Activated CD4-positive, alpha-beta T cell treated with anti-CD3 and anti-CD28 coated beads for 36 hours (primary cell): ENCODE measurements at regions of chr11 and their contacts with region 1.

Region 1: GRCh38 chr11:117946842-117947526 is 17.8 kb upstream of the TMPRSS13 start:
- DNase-seq: peak; percentile 92
- ATAC-seq: peak; percentile 59
- H3K4me3 Mint-ChIP-seq: no peak overlapping the region
- H3K27ac Mint-ChIP-seq: peak overlapping the region; percentile 68
- H3K4me1 Mint-ChIP-seq: peaks cover 79% of the 10 kb centered on the region
- H3K27me3 Mint-ChIP-seq: no peaks in the 10 kb centered on the region

Region 2: DNA sequence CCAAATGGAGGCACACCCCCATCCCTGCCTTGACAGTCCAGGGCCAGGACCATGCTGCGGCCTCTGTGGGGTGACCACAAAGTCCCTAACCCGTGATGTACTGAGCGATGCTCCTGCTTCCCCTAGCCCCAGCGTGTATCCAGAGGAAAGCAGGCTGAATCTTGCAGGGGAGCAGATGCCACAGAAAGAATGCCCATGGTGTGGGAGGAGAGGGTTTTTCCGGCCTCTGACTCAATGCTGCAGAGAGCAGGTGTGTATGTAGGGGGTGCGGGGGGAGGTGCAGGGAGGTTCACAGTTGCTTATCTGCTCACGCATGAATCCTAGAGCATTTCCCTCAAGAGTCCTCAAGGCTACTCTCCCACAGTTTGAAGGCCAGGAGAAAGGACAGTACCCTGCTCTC is 488.7 kb before region 1 on chr11:
- CTCF ChIA-PET with region 1: no interaction called
- POLR2A ChIA-PET with region 1: no interaction called
- intact Hi-C with region 1: loop called in 1 of 2 experiments (anchors 5 kb)
- DNase-seq: peak; percentile 73
- ATAC-seq: peak; percentile 57
- H3K4me3 Mint-ChIP-seq: peak overlapping the region; percentile 17
- H3K27ac Mint-ChIP-seq: peak overlapping the region; percentile 25
- H3K4me1 Mint-ChIP-seq: peaks cover 17% of the 10 kb centered on the region
- H3K27me3 Mint-ChIP-seq: peaks cover 7% of the 10 kb centered on the region

Region 3: DNA sequence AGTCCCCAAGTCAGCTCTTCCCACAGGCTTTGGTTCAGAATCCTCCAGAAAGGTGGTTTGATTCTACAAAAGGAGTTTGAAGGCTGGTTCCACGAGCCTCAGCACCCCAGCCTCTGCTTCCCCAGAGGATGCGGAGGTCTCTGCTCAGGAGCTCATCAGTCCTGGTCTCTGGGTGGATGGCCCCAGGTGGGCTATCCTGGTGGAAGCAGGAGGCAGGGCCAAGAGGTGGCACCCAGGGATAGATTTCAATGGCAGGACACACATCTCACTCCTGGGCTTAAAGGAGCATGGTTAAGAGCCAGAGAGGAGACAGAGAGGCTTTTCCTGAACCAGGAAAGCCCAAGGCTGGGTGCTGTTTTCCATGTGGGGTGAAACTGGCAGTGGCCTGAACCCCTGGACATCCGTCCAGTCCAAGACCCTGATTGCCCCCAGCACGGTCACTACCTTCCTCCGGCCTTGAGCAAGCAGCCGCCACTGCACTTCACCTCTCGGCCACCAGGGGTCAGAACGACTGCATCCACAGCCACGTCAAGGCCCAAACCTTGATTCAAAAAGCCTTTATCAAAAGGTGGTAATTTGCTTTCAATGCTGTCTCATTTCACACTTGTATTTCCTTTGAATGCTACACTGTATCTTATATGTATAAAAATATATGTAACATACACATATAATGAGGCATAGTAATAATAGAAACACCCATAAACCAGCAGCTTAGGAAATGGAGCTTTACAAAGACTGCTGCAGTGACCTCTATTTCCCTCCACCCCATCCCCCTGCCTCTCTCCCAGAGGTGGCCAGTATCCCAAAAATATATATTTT is 103.1 kb before region 1 on chr11:
- CTCF ChIA-PET with region 1: interaction called, 72 read pairs
- POLR2A ChIA-PET with region 1: no interaction called
- intact Hi-C with region 1: loop called (anchors 1 kb)
- DNase-seq: peak; percentile 91
- ATAC-seq: peak; percentile 89
- H3K4me3 Mint-ChIP-seq: no peak overlapping the region
- H3K27ac Mint-ChIP-seq: no peak overlapping the region
- H3K4me1 Mint-ChIP-seq: no peaks in the 10 kb centered on the region
- H3K27me3 Mint-ChIP-seq: no peaks in the 10 kb centered on the region

Region 4: GRCh38 chr11:117932067-117932370 is 15.0 kb before region 1 on chr11:
- CTCF ChIA-PET with region 1: interaction called, 74 read pairs
- POLR2A ChIA-PET with region 1: interaction called, 3 read pairs
- intact Hi-C with region 1: no loop called
- DNase-seq: peak; percentile 85
- ATAC-seq: peak; percentile 70
- H3K4me3 Mint-ChIP-seq: no peak overlapping the region
- H3K27ac Mint-ChIP-seq: peak overlapping the region; percentile 93
- H3K4me1 Mint-ChIP-seq: peaks cover 62% of the 10 kb centered on the region
- H3K27me3 Mint-ChIP-seq: no peaks in the 10 kb centered on the region

Region 5: DNA sequence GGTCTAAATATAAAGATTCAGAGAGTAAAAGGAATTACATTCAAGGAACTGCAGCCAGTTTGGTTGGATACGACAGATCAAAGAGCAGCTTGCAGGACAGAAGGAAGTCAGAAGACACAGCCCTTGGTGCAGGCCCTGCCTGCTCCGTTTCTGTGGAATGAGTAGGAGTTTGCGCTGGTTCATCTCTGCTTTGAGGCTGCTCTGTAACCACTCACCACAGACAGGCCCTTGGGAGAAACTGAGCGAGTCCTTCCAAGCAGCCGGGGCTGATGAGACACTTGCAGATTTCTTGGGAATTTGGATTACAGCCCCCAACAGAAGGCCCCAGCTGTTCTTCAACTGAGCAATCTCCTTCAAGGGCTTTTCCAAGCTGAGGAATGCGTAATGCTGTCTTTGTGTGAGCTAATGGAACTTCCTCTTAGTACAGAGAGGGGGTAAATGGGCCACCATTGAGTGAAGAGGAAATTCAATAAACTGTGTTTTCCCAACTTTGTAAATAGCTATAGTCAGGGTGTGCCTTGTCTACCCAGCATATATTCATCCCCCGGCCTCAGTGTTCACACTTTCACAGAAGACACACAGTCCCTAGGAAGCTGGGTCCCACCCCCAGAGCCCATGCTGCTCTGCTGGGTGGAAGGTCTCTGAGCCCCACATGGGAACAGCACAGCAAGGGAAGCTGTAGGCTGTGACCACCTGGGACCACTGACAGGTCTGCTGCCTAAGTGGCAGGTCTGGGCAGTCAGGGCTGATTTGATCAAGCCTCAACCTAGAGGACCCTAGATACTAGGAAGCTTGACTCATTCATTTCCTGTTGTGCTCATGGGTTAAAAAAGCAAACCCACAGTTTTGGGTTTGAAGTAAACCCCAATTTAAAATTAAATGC is 55.8 kb after region 1 on chr11:
- CTCF ChIA-PET with region 1: interaction called, 13 read pairs
- POLR2A ChIA-PET with region 1: interaction called, 5 read pairs
- intact Hi-C with region 1: loop called (anchors 2 kb)
- DNase-seq: peak; percentile 85
- ATAC-seq: peak; percentile 67
- H3K4me3 Mint-ChIP-seq: peak overlapping the region; percentile 38
- H3K27ac Mint-ChIP-seq: peak overlapping the region; percentile 97
- H3K4me1 Mint-ChIP-seq: peaks cover 94% of the 10 kb centered on the region
- H3K27me3 Mint-ChIP-seq: no peaks in the 10 kb centered on the region

Region 6: DNA sequence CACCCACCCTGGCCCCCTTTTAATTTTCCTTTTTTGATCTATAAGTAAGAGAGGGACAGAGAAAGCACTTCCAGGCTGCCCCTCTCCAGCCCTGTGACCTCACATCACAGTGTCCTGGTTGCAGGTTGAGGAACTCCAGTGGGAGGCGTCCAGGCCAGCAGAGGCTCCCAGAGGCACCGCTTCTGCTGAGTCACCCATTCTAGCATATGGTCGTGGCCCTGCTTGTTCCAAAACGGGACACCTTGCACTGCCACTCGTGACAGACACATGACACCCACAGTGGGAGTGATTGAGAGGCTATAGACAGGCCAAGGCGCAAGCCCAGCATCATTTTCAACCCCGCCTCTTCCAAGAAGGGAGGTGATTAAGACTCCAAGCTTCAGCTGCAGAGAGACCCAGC is 113.9 kb after region 1 on chr11:
- CTCF ChIA-PET with region 1: interaction called, 211 read pairs
- POLR2A ChIA-PET with region 1: no interaction called
- intact Hi-C with region 1: no loop called
- DNase-seq: no peak
- ATAC-seq: peak; percentile 30
- H3K4me3 Mint-ChIP-seq: no peak overlapping the region
- H3K27ac Mint-ChIP-seq: no peak overlapping the region
- H3K4me1 Mint-ChIP-seq: no peaks in the 10 kb centered on the region
- H3K27me3 Mint-ChIP-seq: peaks cover 5% of the 10 kb centered on the region

Region 7: GRCh38 chr11:118117790-118118601 is 171.0 kb after region 1 on chr11:
- CTCF ChIA-PET with region 1: no interaction called
- POLR2A ChIA-PET with region 1: no interaction called
- intact Hi-C with region 1: no loop called
- DNase-seq: no peak
- ATAC-seq: no peak
- H3K4me3 Mint-ChIP-seq: no peak overlapping the region
- H3K27ac Mint-ChIP-seq: no peak overlapping the region
- H3K4me1 Mint-ChIP-seq: no peaks in the 10 kb centered on the region
- H3K27me3 Mint-ChIP-seq: peaks cover 10% of the 10 kb centered on the region